HepG2 (cell line): ENCODE measurements at regions of chr11 and their contacts with region 1.

Region 1: DNA sequence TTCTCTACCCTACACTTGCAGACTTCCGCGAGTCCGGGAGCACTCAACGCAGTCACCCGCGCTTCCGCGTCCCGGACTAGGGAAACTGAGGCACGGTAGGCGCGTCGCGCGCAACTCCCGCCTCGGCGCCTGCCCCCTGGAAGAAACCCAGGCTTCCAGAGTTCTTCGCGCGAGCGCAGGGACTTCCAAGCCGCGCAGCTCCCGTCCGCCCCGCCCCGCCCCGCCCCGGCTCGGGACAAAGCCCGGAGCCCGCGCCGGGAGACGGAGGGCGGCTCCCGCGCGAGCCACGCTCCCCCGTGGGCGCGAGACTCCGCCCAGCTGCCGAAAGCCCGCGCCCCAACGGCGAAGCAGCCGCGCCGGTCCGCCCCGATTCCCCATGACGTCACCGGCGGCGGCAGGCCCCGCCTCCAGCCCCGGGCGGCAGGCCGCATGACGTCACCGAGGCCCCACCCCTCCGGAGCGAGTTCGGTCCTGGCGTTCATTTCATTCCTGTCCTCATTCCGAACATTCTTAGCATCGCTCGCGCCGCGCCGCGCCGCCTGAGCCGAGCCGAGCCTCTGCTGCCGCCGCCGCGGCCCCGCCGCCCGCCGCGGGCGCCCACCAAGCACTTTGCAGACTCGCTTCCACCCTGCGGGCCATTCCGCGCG is at the start of gene TEAD1:
- DNase-seq: peak; percentile 84
- ATAC-seq: peak; percentile 90
- H3K4me3 ChIP-seq: peak within 1 kb of the TSS; percentile 84 to 100 (median 89)
- H3K27ac ChIP-seq: peak within 1 kb of the TSS; percentile 74
- H3K4me1 ChIP-seq: peaks cover 70% of the 10 kb centered on the region
- H3K27me3 ChIP-seq: no peaks in the 10 kb centered on the region
- CTCF ChIP-seq: no peak
- EP300 ChIP-seq: no peak
- POLR2A ChIP-seq: peak in 1 of 2 experiments; percentile 49; a peak in 2 of 4 replicates
- RAD21 ChIP-seq: no peak; the same call in 1 of the 2 replicates
- total RNA-seq, gene TEAD1: 30.5 and 40.7 TPM in 2 replicates

Region 2: GRCh38 chr11:12599408-12600143 is 74.5 kb before region 1 on chr11:
- CTCF ChIA-PET with region 1: no interaction called
- POLR2A ChIA-PET with region 1: no interaction called
- in situ Hi-C with region 1: no loop called
- intact Hi-C with region 1: loop called (anchors 1 kb)
- DNase-seq: peak; percentile 91
- ATAC-seq: peak; percentile 99
- H3K4me3 ChIP-seq: no peak overlapping the region
- H3K27ac ChIP-seq: no peak overlapping the region
- H3K4me1 ChIP-seq: peaks cover 26% of the 10 kb centered on the region
- H3K27me3 ChIP-seq: no peaks in the 10 kb centered on the region
- CTCF ChIP-seq: peak; percentile 96
- EP300 ChIP-seq: peak in 1 of 2 experiments; percentile 55; a peak in 2 of 4 replicates
- POLR2A ChIP-seq: no peak
- RAD21 ChIP-seq: peak; percentile 89

Region 3: DNA sequence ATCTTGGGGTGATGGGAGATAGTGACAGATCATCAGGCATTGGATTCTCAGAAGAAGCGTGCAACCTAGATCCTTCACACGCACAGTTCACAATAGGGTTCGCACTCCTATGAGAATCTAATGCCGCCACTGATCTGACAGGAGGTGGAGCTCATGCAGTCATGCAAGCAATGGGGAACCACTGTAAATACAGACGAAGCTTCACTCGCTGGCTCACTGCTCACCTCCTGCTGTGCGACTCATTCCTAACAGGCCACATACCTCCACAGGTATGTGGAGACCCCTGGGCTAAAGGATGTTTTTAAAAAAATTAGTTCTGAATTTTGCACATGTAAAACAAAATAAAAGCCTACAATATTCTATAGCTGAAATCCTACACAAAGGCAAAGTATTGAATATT is 20.3 kb before region 1 on chr11:
- CTCF ChIA-PET with region 1: no interaction called
- POLR2A ChIA-PET with region 1: no interaction called
- in situ Hi-C with region 1: no loop called
- intact Hi-C with region 1: no loop called
- DNase-seq: peak; percentile 61
- ATAC-seq: peak; percentile 86
- H3K4me3 ChIP-seq: no peak overlapping the region
- H3K27ac ChIP-seq: no peak overlapping the region
- H3K4me1 ChIP-seq: no peaks in the 10 kb centered on the region
- H3K27me3 ChIP-seq: no peaks in the 10 kb centered on the region
- CTCF ChIP-seq: peak; percentile 71
- EP300 ChIP-seq: no peak
- POLR2A ChIP-seq: no peak
- RAD21 ChIP-seq: no peak

Region 4: DNA sequence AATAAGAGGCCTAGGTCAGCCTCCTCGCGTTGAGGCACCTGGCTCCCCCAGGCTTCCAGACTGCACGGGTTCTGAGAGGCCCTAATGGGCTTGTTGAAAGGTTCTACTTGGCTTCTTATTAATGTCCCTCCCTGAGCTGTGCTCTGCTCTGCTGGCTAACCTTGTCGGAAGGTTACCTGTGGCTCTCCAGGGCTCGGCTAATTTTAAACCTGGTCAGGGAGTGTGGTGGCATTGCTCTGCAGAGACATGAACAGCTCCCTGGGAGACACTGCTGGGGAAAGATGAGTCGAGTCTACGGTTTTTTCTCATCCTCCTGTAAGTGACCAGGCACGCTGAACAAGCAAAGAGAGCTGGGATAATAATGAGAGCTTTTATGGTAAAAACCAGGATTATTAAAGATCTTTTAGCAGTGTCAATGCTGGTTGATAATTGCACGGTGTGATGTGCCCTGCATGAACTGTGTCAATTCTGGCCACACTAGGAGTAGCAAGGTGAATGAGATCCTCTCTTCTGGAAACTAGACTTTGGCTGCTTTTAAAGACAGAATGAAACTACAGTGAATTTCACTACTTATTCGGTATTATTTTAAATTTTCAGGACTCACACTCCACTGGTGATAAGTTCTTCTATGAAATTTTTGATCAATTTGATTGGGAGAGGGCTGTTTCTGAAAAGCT is 70.9 kb after region 1 on chr11:
- CTCF ChIA-PET with region 1: no interaction called
- POLR2A ChIA-PET with region 1: no interaction called
- in situ Hi-C with region 1: no loop called
- intact Hi-C with region 1: loop called (anchors 2 kb)
- DNase-seq: no peak
- ATAC-seq: peak; percentile 85
- H3K4me3 ChIP-seq: 0 out of 6 replicates have a peak overlapping the region, but pooled peaks of 1 of the 3 experiments have one; percentile 5
- H3K27ac ChIP-seq: peak overlapping the region; percentile 47
- H3K4me1 ChIP-seq: peaks cover 42% of the 10 kb centered on the region
- H3K27me3 ChIP-seq: no peaks in the 10 kb centered on the region
- CTCF ChIP-seq: no peak
- EP300 ChIP-seq: no peak
- POLR2A ChIP-seq: no peak
- RAD21 ChIP-seq: no peak

Region 5: DNA sequence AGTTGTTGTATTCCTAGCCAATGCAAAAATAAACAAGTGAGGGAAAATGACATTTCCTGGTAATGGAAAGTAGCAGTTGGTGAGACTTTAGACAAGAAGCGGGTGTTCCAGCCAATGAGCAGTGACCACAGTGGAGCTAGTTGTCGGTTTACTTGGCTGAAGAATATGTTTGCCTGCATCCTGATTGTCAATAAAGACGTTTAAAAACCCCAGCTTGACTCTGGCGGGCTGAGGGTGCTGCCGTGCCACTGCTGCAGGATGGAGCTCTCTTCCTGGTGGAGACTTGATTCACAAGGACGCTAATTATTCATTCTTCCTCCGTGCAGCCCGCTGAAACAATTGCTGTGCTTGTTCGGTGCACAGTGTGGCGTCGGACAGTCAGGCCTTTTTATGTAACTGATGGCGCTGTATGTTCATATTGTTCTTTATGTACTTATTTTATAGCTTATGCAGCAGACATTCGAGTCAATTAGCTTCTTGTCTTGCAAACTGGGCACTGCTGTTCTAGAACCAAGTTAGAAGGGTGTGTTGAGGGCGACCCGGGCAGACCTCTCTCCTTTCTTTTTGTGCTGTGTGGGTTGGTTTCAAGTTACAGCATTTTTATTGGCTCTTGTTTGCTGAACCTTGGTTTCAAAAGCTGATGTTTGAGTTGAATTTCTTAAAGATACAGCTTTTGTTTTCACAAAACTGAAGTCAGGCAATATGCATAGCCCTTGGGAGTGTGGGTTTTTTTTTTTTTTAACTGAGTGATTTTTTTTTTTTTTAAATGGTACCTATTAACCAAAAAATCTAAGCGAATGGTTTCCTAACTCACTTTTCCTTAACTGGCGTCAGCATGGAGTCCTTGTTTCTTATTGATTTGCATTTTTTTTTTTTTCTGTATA is 154.1 kb after region 1 on chr11:
- CTCF ChIA-PET with region 1: no interaction called
- POLR2A ChIA-PET with region 1: interaction called, 5 read pairs
- in situ Hi-C with region 1: no loop called
- intact Hi-C with region 1: loop called (anchors 5 kb)
- DNase-seq: peak; percentile 66
- ATAC-seq: peak; percentile 78
- H3K4me3 ChIP-seq: peak overlapping the region; percentile 47 to 72 (median 67)
- H3K27ac ChIP-seq: peak overlapping the region; percentile 87
- H3K4me1 ChIP-seq: peaks cover 78% of the 10 kb centered on the region
- H3K27me3 ChIP-seq: no peaks in the 10 kb centered on the region
- CTCF ChIP-seq: no peak
- EP300 ChIP-seq: no peak; a peak in 1 of 4 replicates
- POLR2A ChIP-seq: peak; percentile 45 to 52
- RAD21 ChIP-seq: no peak

Region 6: DNA sequence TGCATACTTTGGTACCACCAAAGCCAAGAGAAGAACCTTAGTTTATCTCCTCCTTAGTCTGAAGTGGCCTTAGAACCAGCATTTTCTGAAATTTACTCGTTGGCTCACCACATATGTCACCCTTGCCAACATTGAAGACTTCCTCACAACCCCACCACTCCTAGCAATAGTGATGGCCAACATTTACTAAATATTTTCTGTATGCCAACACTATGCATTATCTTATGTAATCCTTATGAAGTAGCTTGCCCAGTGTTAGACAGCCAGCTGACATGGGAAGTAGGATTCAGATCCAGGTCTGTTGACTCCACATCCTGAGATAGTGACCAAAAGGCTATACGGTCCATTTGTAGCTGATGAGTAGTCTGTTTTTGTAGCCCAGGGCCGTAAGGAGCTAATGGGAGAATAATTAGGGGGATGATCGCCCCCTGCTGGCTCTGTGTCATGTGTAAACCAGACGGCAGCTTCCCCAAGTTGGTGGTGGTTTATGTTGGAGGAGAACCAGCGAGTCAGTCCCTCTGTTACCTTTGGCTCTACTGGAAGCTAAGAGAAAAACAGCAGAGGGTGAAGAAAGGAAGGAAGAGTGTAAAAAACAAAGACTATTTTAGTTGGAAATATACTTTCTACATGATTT is 214.6 kb after region 1 on chr11:
- CTCF ChIA-PET with region 1: no interaction called
- POLR2A ChIA-PET with region 1: interaction called, 5 read pairs
- in situ Hi-C with region 1: loop called (anchors 10 kb)
- intact Hi-C with region 1: loop called (anchors 1 kb)
- DNase-seq: peak; percentile 71
- ATAC-seq: peak; percentile 90
- H3K4me3 ChIP-seq: no peak overlapping the region
- H3K27ac ChIP-seq: no peak overlapping the region
- H3K4me1 ChIP-seq: no peaks in the 10 kb centered on the region
- H3K27me3 ChIP-seq: no peaks in the 10 kb centered on the region
- CTCF ChIP-seq: peak; percentile 88
- EP300 ChIP-seq: no peak
- POLR2A ChIP-seq: no peak
- RAD21 ChIP-seq: peak; percentile 89